Activated CD8-positive, alpha-beta T cell treated with anti-CD3 and anti-CD28 coated beads, Interleukin-2, amount 10 ng/mL, durations not matched to agents 7 days and 5 days (primary cell): ENCODE measurements at regions of chr1 and their contacts with region 1.

Region 1: GRCh38 chr1:17606826-17607440 is 67.4 kb downstream of the ARHGEF10L start:
- DNase-seq: peak; percentile 64
- ATAC-seq: peak; percentile 44
- H3K4me3 Mint-ChIP-seq: no peak overlapping the region
- H3K27ac Mint-ChIP-seq: no peak overlapping the region
- H3K4me1 Mint-ChIP-seq: no peaks in the 10 kb centered on the region
- H3K27me3 Mint-ChIP-seq: no peaks in the 10 kb centered on the region

Region 2: DNA sequence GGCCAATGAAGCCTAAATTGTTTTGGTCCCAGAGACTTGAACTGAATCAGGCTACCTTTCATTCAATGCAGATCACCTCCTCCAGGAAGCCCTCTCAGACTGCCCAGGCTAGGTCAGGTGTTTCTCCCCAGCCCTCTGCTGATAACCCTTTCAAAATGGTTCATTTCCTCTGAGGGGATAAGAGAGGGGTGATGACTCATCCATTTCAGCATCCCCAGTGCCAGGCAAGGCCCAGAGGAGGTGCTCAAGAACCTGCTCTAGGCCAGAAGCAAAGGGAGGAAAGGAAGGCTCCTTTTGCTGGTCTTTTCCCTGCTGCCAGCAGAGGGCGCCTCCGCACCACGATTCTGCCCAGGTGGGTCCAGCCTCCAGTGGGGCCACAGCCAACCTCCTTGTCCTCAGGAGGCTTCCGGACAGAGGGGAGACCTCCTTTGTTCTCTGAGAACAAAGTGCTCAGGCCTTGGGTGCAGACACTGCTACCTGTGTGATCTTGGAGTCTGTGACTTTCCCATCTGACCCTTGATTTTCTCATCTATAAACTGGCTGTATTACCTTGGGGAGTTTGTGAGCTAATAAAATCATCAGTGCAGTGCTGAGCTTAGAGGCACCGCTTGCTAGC is 112.7 kb before region 1 on chr1:
- CTCF ChIA-PET with region 1: interaction called, 27 read pairs
- POLR2A ChIA-PET with region 1: no interaction called
- DNase-seq: peak; percentile 75
- ATAC-seq: peak; percentile 93
- H3K4me3 Mint-ChIP-seq: no peak overlapping the region
- H3K27ac Mint-ChIP-seq: no peak overlapping the region
- H3K4me1 Mint-ChIP-seq: peaks cover 2% of the 10 kb centered on the region
- H3K27me3 Mint-ChIP-seq: peaks cover 5% of the 10 kb centered on the region

Region 3: DNA sequence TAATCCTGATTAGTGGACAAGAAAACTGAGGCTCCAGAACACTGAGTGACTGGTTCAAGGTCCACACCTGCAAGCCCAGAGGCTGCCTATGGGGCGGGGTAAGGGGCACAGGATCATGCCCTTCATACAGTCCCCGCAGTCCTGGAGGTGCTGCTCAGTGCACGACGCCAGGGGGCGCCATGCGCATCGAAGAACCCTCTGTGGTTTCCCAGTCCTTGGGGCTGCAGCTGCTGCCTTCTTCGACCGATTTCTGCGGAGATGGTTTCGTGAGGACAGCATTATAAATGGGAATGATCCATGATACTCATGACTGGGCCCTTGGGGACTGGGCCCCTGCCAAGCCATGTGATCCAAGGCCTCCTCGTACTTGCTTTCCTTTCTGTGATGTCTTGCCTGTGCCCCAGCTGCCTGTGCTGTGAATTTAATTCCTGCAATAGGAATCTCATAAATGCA is 104.6 kb before region 1 on chr1:
- CTCF ChIA-PET with region 1: interaction called, 48 read pairs
- POLR2A ChIA-PET with region 1: no interaction called
- DNase-seq: peak; percentile 73
- ATAC-seq: peak; percentile 79
- H3K4me3 Mint-ChIP-seq: no peak overlapping the region
- H3K27ac Mint-ChIP-seq: no peak overlapping the region
- H3K4me1 Mint-ChIP-seq: no peaks in the 10 kb centered on the region
- H3K27me3 Mint-ChIP-seq: peaks cover 7% of the 10 kb centered on the region